Ascending aorta (tissue), 2 donors: ENCODE measurements at regions of chr3 and their contacts with region 1.

Region 1: DNA sequence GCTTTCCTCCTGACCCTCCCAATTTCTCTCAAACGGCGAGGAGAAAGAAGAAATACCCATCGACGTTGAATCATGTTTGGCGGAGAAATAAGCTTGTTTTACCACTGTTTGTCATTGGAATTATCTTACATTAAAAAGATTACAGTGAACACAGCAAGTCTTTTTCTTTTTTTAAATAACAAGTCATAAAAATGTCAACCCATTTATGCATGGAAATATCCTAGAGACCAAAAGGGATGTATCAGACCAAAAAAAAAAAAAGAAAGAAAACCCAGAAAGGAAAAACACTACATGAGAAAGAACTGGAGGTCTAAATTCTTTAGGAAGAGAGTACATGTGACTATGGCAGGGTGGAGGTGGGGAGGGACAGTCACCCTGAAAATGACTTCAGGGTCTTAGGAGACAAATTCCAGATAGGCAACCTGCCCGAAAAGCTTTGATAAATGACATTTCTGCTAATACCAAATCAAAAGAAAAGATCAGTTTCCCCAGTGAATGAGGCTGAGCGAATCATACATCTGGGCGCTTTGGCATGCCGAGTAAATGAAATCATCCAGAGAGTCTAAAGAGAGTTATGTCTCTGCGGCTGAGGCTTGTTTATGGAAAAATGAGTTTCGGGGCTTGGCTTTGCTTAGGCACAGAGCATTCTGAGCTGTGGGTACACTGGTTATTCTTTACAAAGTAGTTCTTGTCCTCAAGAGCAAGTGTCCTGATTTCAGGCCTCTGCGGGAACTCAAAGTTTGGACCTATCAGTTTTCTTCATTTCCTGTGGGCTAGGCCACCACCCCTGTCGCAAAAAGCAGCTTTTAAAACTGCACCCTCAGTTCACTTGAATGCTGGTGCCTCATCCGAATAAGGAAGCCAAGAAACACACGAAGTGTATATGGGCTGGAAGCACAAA is 110.1 kb upstream of the TGFBR2 start:
- DNase-seq: peak in 1 of 2 donors; percentile 88
- H3K4me3 ChIP-seq: peak overlapping the region in 1 of 2 donors; percentile 0
- H3K27ac ChIP-seq: peak overlapping the region; percentile 85 to 92
- H3K4me1 ChIP-seq: peaks cover 32 to 72% of the 10 kb centered on the region in 2 donors
- H3K27me3 ChIP-seq: no peaks in the 10 kb centered on the region
- CTCF ChIP-seq: no peak

Region 2: GRCh38 chr3:30455840-30456239 is 40.5 kb before region 1 on chr3:
- intact Hi-C with region 1: loop called (anchors 2 kb)
- DNase-seq: peak in 1 of 2 donors; percentile 84
- H3K4me3 ChIP-seq: no peak overlapping the region
- H3K27ac ChIP-seq: peak overlapping the region; percentile 69 to 72
- H3K4me1 ChIP-seq: peaks cover 3 to 12% of the 10 kb centered on the region in 2 donors
- H3K27me3 ChIP-seq: no peaks in the 10 kb centered on the region
- CTCF ChIP-seq: no peak

Region 3: GRCh38 chr3:30475038-30475808 is 21.1 kb before region 1 on chr3:
- intact Hi-C with region 1: no loop called
- DNase-seq: no peak
- H3K4me3 ChIP-seq: no peak overlapping the region
- H3K27ac ChIP-seq: no peak overlapping the region
- H3K4me1 ChIP-seq: peaks cover 0 to 15% of the 10 kb centered on the region in 2 donors
- H3K27me3 ChIP-seq: no peaks in the 10 kb centered on the region
- CTCF ChIP-seq: no peak

Region 4: DNA sequence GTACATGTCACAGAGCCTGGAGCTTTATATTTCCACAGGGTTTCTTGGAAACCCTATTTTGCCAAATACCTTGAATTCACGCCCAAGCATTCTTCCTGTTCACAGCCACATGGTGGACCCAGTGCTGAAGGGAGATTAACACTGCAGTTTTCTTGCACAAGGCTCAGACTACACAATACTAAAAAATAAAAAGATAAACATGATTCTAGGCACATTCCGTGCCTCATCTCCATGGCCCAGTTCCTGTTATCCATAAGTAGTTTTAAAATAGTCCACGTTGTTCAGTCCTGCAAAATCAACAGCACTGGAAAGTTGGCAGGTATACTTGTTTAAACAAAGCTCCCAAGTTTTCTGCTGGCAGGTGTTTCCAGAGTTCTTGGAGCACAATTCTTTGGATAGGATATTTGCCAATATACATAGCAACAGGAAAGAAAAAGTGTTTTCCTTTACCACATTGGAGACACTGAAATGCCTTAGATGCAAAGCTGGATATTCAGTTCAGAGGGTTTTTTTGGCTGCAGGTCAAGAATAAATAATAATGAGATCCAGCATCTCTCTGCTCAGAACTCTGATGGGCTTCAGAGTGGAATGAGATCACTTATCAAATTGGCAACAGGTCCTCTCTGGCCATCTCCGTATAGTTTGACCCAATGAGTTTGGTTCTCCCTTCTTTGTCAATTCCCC is 22.0 kb after region 1 on chr3:
- intact Hi-C with region 1: loop called (anchors 1 kb)
- DNase-seq: peak in 1 of 2 donors; percentile 89
- H3K4me3 ChIP-seq: no peak overlapping the region
- H3K27ac ChIP-seq: peak overlapping the region; percentile 72
- H3K4me1 ChIP-seq: peaks cover 3 to 33% of the 10 kb centered on the region in 2 donors
- H3K27me3 ChIP-seq: no peaks in the 10 kb centered on the region
- CTCF ChIP-seq: peak in 2 of 3 experiments; percentile 14 to 31